Activated CD4-positive, alpha-beta memory T cell treated with anti-CD3 and anti-CD28 coated beads for 36 hours (primary cell): ENCODE measurements at regions of chr2 and their contacts with region 1.

Region 1: GRCh38 chr2:170815746-170816503 is 762 bp upstream of the GAD1 start:
- DNase-seq: peak; percentile 78
- H3K4me3 Mint-ChIP-seq: peak overlapping the region; percentile 64
- H3K27ac Mint-ChIP-seq: peak overlapping the region; percentile 11
- H3K4me1 Mint-ChIP-seq: peaks cover 43% of the 10 kb centered on the region
- H3K27me3 Mint-ChIP-seq: peaks cover 72% of the 10 kb centered on the region

Region 2: GRCh38 chr2:170235860-170236679 is 579.9 kb before region 1 on chr2:
- CTCF ChIA-PET with region 1: interaction called, 10 read pairs
- POLR2A ChIA-PET with region 1: no interaction called
- intact Hi-C with region 1: loop called (anchors 2 kb)
- DNase-seq: peak; percentile 18
- H3K4me3 Mint-ChIP-seq: no peak overlapping the region
- H3K27ac Mint-ChIP-seq: no peak overlapping the region
- H3K4me1 Mint-ChIP-seq: no peaks in the 10 kb centered on the region
- H3K27me3 Mint-ChIP-seq: peaks cover 13% of the 10 kb centered on the region

Region 3: GRCh38 chr2:170361090-170361936 is 454.6 kb before region 1 on chr2:
- CTCF ChIA-PET with region 1: interaction called, 40 read pairs
- POLR2A ChIA-PET with region 1: no interaction called
- intact Hi-C with region 1: loop called (anchors 1 kb)
- DNase-seq: peak; percentile 71
- H3K4me3 Mint-ChIP-seq: no peak overlapping the region
- H3K27ac Mint-ChIP-seq: no peak overlapping the region
- H3K4me1 Mint-ChIP-seq: peaks cover 25% of the 10 kb centered on the region
- H3K27me3 Mint-ChIP-seq: peaks cover 22% of the 10 kb centered on the region

Region 4: DNA sequence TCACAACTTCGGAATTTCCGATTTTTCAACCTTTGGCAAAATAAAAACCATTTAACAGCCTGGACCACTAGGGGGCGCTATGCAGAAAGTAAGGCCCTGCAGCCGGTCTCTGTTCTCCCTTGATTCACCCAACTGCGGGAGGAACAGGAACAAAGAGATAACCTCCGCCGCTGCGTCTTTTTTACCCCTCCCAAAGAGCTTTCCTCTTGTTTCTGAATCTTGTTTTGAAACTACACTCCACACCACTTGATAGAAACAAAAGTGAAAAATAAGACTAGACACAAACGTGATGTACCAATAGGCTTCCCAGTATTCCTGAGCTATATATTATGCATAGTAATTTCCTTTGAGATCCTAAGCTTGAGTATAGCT is 406.8 kb before region 1 on chr2:
- CTCF ChIA-PET with region 1: interaction called, 37 read pairs
- POLR2A ChIA-PET with region 1: no interaction called
- intact Hi-C with region 1: loop called (anchors 1 kb)
- DNase-seq: peak; percentile 80
- H3K4me3 Mint-ChIP-seq: no peak overlapping the region
- H3K27ac Mint-ChIP-seq: no peak overlapping the region
- H3K4me1 Mint-ChIP-seq: peaks cover 5% of the 10 kb centered on the region
- H3K27me3 Mint-ChIP-seq: peaks cover 20% of the 10 kb centered on the region

Region 5: DNA sequence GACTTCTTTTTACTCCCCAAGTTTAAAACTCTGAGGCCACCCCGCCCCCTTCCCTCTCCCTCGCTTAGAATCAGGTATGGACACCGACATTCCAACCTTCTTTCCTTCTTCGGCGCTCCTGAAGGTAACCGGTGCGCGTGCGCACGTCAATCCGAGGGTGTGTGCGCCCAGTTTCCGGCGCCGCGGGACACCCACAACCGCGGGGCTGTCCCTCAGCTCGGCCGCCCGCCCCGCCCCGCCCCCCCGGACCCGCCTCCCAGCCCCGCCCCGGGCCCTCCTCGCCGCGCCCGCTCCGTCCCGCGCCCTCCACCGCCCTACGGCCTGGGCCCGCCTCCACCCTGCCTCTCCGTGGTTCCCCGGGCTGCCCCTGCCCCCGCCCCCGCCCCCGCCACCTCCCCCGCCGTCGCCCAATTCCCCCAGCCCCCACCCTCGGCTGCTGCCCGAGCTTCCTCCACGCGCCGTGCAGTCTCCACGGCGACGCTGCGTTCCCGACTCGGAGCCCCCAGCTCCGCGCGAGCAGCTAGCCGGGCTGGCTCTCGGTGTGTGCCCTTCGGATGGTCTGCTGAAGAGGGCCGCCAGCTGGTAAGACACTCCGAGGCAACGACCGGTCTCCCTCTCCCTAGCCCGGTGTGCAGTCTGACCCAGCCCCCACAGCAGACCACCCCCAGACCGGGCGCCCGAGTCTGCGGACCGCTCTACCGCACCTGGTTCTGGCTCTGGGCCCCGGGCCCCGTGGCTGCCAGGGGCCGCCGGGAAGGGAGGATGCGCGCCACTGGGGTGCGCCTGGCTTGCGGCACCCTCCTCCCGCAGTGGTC is 45.1 kb before region 1 on chr2:
- CTCF ChIA-PET with region 1: interaction called, 7 read pairs
- POLR2A ChIA-PET with region 1: no interaction called
- intact Hi-C with region 1: loop called (anchors 2 kb)
- DNase-seq: peak; percentile 75
- H3K4me3 Mint-ChIP-seq: peak overlapping the region; percentile 77
- H3K27ac Mint-ChIP-seq: no peak overlapping the region
- H3K4me1 Mint-ChIP-seq: peaks cover 7% of the 10 kb centered on the region
- H3K27me3 Mint-ChIP-seq: peaks cover 14% of the 10 kb centered on the region

Region 6: GRCh38 chr2:170851635-170852034 is 35.7 kb after region 1 on chr2:
- CTCF ChIA-PET with region 1: no interaction called
- POLR2A ChIA-PET with region 1: no interaction called
- intact Hi-C with region 1: no loop called
- DNase-seq: no peak
- H3K4me3 Mint-ChIP-seq: no peak overlapping the region
- H3K27ac Mint-ChIP-seq: no peak overlapping the region
- H3K4me1 Mint-ChIP-seq: no peaks in the 10 kb centered on the region
- H3K27me3 Mint-ChIP-seq: peaks cover 4% of the 10 kb centered on the region

Region 7: GRCh38 chr2:171160956-171161740 is 345.2 kb after region 1 on chr2:
- CTCF ChIA-PET with region 1: no interaction called
- POLR2A ChIA-PET with region 1: no interaction called
- intact Hi-C with region 1: no loop called
- DNase-seq: peak; percentile 75
- H3K4me3 Mint-ChIP-seq: peak overlapping the region; percentile 80
- H3K27ac Mint-ChIP-seq: peak overlapping the region; percentile 88
- H3K4me1 Mint-ChIP-seq: peaks cover 49% of the 10 kb centered on the region
- H3K27me3 Mint-ChIP-seq: no peaks in the 10 kb centered on the region